ENCODE measurements at regions of chrX and their contacts with region 1.

Region 1: GRCh38 chrX:71181910-71182799 is 37.5 kb downstream of the NLGN3 start:
- DNase-seq: peak; percentile 84 to 91
- ATAC-seq: peak; percentile 99
- H3K4me3 ChIP-seq: peak overlapping the region; percentile 57 to 64 (median 60)
- H3K27ac ChIP-seq: peak overlapping the region; percentile 86 to 91 (median 90)
- H3K4me1 ChIP-seq: no peaks in the 10 kb centered on the region
- H3K27me3 ChIP-seq: no peaks in the 10 kb centered on the region
- CTCF ChIP-seq: no peak
- POLR2A ChIP-seq: peak; percentile 74 to 75

Region 2: DNA sequence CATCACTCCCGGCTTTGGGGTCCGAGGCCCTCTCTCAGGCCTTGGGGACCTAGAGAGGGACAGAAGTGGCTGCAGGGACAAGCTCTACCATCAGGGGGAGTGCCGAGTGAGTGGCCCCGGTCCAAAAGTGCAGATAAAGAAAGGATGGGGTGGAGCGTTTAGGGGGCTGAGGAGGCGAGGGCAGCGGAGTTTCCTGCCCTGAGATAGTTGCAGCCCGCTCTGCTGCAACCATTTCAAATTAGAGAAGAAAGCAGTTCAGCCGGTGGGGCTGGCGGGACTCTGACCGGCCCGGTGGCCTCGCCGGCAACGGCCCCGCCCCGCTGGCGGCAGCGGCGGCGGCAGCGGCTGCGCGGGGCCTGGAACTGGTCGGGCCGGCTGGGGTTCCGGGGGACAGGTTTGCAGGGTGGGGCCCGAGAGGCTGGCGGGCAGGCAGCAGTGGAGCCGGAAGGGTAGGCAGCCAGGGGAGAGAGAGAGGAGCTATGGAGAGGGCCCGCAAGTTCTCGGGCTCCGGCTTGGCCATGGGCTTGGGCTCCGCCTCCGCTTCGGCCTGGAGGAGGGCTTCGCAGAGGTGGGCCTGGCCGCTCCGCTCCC is 729.9 kb before region 1 on chrX:
- in situ Hi-C with region 1: no loop called
- intact Hi-C with region 1: loop called (anchors 2 kb)
- DNase-seq: peak in 1 of 2 donors; percentile 4
- ATAC-seq: peak; percentile 72 to 83
- H3K4me3 ChIP-seq: peak overlapping the region; percentile 31 to 62 (median 58)
- H3K27ac ChIP-seq: peak overlapping the region in 2 of 4 donors; percentile 4 to 31
- H3K4me1 ChIP-seq: no peaks in the 10 kb centered on the region
- H3K27me3 ChIP-seq: no peaks in the 10 kb centered on the region
- CTCF ChIP-seq: peak in 4 of 5 experiments; percentile 37 to 70 (median 61)
- POLR2A ChIP-seq: no peak

Region 3: DNA sequence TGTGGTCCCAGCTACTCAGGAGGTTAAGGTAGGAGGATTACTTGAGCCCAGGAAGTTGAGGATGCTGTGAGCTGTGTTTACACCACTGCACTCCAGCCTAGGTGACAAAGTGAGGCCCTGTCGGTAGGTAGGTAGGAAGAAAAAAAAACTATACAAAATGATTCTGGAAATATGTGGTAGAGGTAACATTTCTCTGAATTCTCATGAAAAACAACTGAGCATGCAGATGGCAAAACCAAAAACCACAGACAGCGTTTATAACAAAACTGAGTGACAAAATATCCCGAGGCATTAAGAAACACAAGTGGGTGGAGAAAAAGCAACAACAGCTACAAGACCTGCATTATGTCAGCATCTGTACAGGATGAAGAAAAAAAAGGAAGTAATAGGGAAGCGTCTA is 525.9 kb before region 1 on chrX:
- in situ Hi-C with region 1: no loop called
- intact Hi-C with region 1: no loop called
- DNase-seq: no peak
- ATAC-seq: no peak
- H3K4me3 ChIP-seq: no peak overlapping the region
- H3K27ac ChIP-seq: no peak overlapping the region
- H3K4me1 ChIP-seq: no peaks in the 10 kb centered on the region
- H3K27me3 ChIP-seq: no peaks in the 10 kb centered on the region
- CTCF ChIP-seq: no peak
- POLR2A ChIP-seq: no peak

Region 4: DNA sequence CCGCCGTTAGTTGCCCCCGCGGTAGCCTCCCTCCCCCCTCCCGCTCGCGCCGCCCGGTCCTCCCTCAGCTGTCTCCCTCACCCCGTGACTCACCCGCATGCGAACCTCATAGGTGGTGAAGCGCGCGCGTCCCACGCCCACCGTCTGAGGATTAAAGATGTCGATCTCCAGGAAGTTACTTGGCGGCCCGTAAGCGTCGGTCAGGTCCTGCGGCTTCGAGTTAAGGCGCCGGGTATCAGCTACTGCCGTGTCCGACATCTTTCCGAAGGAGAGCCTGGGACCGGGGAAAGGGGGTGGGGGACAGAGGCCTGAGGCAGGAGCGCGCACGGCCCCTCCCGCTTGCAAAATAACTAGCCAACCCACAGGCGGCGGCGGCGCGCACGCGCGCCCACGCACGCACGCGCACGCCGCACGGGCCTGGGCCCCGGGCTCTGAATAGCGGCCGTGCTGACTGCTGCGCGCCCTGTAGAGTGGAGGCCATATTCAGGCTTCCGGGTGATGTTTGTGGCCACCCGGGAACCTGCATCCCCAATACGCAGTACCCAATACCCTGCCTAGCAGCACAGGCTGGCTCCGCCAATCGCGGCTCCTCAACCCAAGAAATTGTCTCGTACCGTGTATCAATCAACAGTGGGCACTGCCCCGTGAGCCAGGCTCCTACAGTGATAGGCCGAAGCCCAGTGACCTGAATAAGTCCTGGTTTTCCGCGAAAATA is 113.9 kb before region 1 on chrX and contains the start of gene SNX12:
- in situ Hi-C with region 1: no loop called
- intact Hi-C with region 1: loop called (anchors 1 kb)
- DNase-seq: peak; percentile 85 to 91
- ATAC-seq: peak; percentile 96 to 97
- H3K4me3 ChIP-seq: peak within 1 kb of the TSS; percentile 66 to 74 (median 72)
- H3K27ac ChIP-seq: peak within 1 kb of the TSS; percentile 86 to 93 (median 89)
- H3K4me1 ChIP-seq: peaks cover 3 to 8% of the 10 kb centered on the region in 2 donors
- H3K27me3 ChIP-seq: no peaks in the 10 kb centered on the region
- CTCF ChIP-seq: peak in 3 of 5 experiments; percentile 72 to 96 (median 86)
- POLR2A ChIP-seq: peak; percentile 72 to 78
- total RNA-seq, gene SNX12: 31.7 to 66.9 (median 43.4) TPM

Region 5: GRCh38 chrX:71118032-71118984 is 63.8 kb before region 1 on chrX and contains the start of gene MED12:
- in situ Hi-C with region 1: no loop called
- intact Hi-C with region 1: loop called (anchors 1 kb)
- DNase-seq: peak; percentile 66 to 77
- ATAC-seq: peak; percentile 96 to 97
- H3K4me3 ChIP-seq: peak within 1 kb of the TSS; percentile 70 to 80 (median 75)
- H3K27ac ChIP-seq: peak within 1 kb of the TSS; percentile 87 to 92 (median 90)
- H3K4me1 ChIP-seq: no peaks in the 10 kb centered on the region
- H3K27me3 ChIP-seq: no peaks in the 10 kb centered on the region
- CTCF ChIP-seq: no peak
- POLR2A ChIP-seq: peak; percentile 17 to 29
- total RNA-seq, gene MED12: 11.8 to 25.5 (median 17.4) TPM

Region 6: GRCh38 chrX:71144651-71145050 is 37.5 kb before region 1 on chrX and contains the start of gene NLGN3:
- in situ Hi-C with region 1: no loop called
- intact Hi-C with region 1: no loop called
- DNase-seq: no peak
- ATAC-seq: no peak
- H3K4me3 ChIP-seq: peak within 1 kb of the TSS in 2 of 4 donors; percentile 23 to 27
- H3K27ac ChIP-seq: no peak within 1 kb of the TSS
- H3K4me1 ChIP-seq: peaks cover 0 to 3% of the 10 kb centered on the region in 2 donors
- H3K27me3 ChIP-seq: no peaks in the 10 kb centered on the region
- CTCF ChIP-seq: no peak
- POLR2A ChIP-seq: no peak
- total RNA-seq, gene NLGN3: 0.31 to 0.39 (median 0.31) TPM in 3 of 4 donors, not detected in the other

Measured in gastrocnemius medialis (tissue), 4 donors.